HepG2 (cell line): ENCODE measurements at regions of chr2 and their contacts with region 1.

Region 1: DNA sequence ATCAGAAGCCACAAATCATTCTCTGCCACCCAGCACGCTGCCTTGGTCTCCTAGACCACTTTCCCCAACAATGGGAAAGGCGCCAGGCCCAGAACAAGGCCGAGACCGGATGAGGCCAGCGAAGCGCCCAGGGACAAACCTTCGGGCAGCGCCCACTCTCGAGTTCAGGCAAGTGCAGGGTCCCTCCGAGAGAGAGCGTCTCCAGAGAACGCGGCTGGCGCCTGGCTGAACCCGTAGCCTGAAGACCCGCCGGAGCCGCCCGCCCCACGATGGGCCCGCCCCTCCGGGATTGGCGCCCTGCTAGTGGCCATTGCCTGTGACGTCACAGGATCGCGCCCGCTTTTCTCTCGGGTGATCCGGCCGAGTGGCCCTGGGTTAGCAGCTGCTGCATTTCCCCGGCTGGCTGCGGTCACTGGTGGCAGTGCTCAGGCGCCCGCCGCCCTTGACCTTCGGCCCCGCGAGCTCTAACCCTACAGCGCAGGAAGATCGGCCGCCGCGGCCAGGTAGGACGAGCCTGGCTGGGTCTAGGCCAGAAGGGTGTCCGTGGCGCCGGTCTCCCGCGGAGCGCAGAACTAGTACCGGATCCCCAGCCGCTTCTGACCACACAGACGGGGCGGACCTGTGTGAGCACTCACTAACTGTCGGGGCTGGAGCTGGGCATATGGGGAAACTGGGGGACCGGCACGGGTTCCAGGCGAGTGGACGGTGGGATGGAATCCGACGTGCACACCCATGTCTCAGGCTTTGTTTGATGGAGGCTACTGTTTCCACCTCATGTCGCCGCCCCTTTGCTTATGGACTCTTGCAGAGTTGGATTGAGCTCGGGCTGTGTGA is at the start of gene FAHD2A:
- DNase-seq: peak; percentile 89
- ATAC-seq: peak; percentile 93
- H3K4me3 ChIP-seq: peak within 1 kb of the TSS; percentile 88 to 99 (median 94)
- H3K27ac ChIP-seq: peak within 1 kb of the TSS; percentile 82
- H3K4me1 ChIP-seq: peaks cover 23% of the 10 kb centered on the region
- H3K27me3 ChIP-seq: no peaks in the 10 kb centered on the region; a peak in 1 of 5 replicates
- CTCF ChIP-seq: peak; percentile 24; the same call in 1 of the 2 replicates
- EP300 ChIP-seq: no peak
- POLR2A ChIP-seq: peak; percentile 84 to 94
- RAD21 ChIP-seq: peak; percentile 59
- total RNA-seq, gene FAHD2A: 44.2 and 48.4 TPM in 2 replicates

Region 2: GRCh38 chr2:95165129-95166064 is 237.2 kb before region 1 on chr2 and contains the start of gene ZNF2:
- CTCF ChIA-PET with region 1: no interaction called
- POLR2A ChIA-PET with region 1: interaction called, 12 read pairs
- in situ Hi-C with region 1: no loop called
- intact Hi-C with region 1: loop called (anchors 1 kb)
- DNase-seq: peak; percentile 98
- ATAC-seq: peak; percentile 96
- H3K4me3 ChIP-seq: peak within 1 kb of the TSS; percentile 82 to 98 (median 91)
- H3K27ac ChIP-seq: peak within 1 kb of the TSS; percentile 94
- H3K4me1 ChIP-seq: peaks cover 24% of the 10 kb centered on the region
- H3K27me3 ChIP-seq: no peaks in the 10 kb centered on the region; a peak in 1 of 5 replicates
- CTCF ChIP-seq: peak; percentile 29
- EP300 ChIP-seq: 0 out of 4 replicates have a peak, but pooled peaks of 1 of the 2 experiments have one; percentile 46
- POLR2A ChIP-seq: peak; percentile 95 to 98
- RAD21 ChIP-seq: peak; percentile 54; the same call in 1 of the 2 replicates
- total RNA-seq, gene ZNF2: 6.1 and 8.5 TPM in 2 replicates